Activated CD4-positive, alpha-beta T cell treated with anti-CD3 and anti-CD28 coated beads for 36 hours (primary cell): ENCODE measurements at regions of chr15 and their contacts with region 1.

Region 1: DNA sequence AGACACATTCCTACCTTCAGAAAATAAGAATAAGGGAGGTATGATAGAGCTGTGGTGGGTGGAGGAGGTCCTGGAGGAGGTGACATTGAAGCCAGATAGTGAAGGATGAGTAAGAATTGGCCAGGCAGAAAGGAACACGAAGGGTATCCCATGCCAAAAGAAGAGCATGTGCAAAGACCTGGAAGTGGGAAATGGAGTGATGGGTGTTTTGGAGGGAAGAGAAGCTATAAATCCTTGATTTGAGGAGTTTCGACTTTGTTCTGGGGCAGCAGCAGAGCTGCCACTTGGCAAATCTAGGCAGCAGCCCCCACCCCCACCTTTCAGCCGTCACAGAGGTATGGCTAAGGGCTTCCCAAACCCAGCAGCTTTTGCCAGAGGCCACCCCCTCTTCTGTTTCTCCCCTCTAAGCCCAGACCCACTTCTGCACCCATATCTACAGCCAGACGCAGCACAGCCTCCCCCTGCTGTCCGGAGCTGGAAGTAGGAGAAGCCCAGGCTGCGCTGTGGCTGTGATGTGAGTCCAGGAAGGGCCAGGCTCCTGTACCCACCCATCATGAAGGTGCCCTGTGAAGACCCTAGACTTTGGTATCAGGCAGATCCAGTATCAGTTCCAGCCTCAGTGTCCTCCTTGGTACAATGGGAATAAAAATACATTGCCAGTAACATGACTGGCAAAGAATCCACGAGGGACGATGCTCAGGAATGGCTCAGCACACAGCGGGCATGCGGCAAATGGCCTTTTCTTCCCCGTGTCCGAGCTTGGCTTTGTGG is 188.7 kb upstream of the LINGO1 start:
- DNase-seq: peak; percentile 73
- ATAC-seq: peak; percentile 84
- H3K4me3 Mint-ChIP-seq: no peak overlapping the region
- H3K27ac Mint-ChIP-seq: no peak overlapping the region
- H3K4me1 Mint-ChIP-seq: no peaks in the 10 kb centered on the region
- H3K27me3 Mint-ChIP-seq: peaks cover 42% of the 10 kb centered on the region

Region 2: GRCh38 chr15:77650265-77650664 is 171.1 kb before region 1 on chr15:
- CTCF ChIA-PET with region 1: interaction called, 3 read pairs
- POLR2A ChIA-PET with region 1: no interaction called
- intact Hi-C with region 1: loop called in 1 of 2 experiments (anchors 5 kb)
- DNase-seq: peak; percentile 51
- ATAC-seq: peak; percentile 58
- H3K4me3 Mint-ChIP-seq: no peak overlapping the region
- H3K27ac Mint-ChIP-seq: no peak overlapping the region
- H3K4me1 Mint-ChIP-seq: no peaks in the 10 kb centered on the region
- H3K27me3 Mint-ChIP-seq: peaks cover 4% of the 10 kb centered on the region

Region 3: DNA sequence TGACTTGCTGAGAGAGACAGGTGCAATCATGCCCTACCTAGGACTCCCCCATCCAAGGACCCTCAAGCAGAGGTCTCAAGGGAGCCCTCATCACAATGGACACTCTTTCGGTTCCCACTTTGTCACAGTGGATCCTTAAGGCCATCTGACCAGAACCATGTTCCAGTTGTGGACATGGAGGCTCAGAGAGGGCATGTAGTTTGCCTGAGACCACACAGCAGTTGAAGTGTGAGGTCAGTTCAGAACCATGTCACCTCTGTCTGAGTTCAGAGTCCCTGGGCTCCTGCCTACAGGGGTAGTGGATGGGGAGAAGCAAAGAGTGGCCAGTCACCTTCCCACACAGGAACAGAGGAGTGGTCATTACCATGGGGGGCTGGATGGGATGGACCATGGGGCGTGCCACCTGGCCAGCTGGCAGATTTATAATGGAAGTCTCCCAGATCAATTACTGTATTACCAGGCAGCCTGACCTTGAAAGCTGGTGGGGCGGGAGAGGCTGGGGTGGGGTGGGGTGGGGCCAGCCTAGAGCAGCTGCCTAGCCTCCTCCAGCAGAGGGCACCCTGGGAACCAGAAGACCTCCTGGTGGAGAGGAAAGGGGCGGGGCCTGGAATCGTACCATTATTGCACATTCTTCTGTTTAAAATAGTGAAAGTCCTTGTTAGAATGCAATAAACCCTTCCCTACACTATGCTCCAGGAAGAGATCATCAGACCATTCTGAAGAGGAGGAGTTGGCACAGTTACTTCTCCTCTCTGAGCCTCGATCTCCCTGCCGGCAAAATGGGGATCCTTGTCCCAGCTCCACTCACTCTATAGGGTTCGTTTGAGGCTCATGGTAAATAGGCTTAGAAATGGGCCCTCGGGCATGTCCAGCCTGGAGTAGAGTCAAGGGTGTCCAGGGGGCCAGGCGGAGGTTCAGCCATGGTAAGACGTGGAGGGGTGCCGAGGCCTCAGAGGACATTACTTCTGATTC is 161.7 kb before region 1 on chr15:
- CTCF ChIA-PET with region 1: interaction called, 4 read pairs
- POLR2A ChIA-PET with region 1: no interaction called
- intact Hi-C with region 1: loop called (anchors 2 to 5 kb)
- DNase-seq: peak; percentile 72
- ATAC-seq: peak; percentile 80
- H3K4me3 Mint-ChIP-seq: no peak overlapping the region
- H3K27ac Mint-ChIP-seq: no peak overlapping the region
- H3K4me1 Mint-ChIP-seq: no peaks in the 10 kb centered on the region
- H3K27me3 Mint-ChIP-seq: peaks cover 10% of the 10 kb centered on the region

Region 4: DNA sequence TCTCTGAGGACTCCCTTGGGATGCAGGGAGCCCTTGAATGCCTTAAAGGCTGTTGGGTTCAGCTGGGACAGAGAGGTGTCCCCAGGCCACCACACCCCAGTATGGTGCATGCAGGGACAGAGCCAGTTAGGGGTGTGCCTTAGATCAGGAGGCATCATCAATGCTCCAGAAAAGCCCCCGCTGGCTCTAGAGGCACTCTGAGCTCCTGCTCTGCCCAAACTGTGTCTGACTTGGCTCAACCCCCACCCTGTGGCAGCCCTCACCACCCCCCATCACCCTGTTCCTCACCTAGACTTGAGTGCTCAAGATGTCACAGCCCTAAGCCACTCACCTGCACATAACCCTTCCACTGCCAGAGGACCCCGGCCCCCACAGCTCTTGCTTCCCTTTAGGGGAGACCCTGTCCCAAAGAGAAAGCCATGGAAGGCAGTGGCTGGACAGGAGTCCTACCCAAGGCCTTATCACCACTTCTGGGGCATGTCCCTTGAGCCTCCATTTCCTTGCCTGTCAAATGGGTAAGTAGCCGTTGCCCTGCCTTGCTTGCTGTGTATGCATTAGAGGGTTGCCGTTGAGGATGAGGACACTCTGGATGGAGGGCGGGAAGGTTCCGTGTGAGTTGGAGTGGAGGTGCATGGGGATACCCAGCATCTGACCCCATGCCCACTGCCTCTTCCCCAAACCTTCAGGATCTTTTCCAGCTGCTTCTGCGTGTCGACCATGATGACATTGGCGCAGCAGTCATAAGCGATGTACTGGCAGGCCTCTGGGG is 371.6 kb after region 1 on chr15:
- CTCF ChIA-PET with region 1: no interaction called
- POLR2A ChIA-PET with region 1: no interaction called
- intact Hi-C with region 1: no loop called
- DNase-seq: no peak
- ATAC-seq: no peak
- H3K4me3 Mint-ChIP-seq: no peak overlapping the region
- H3K27ac Mint-ChIP-seq: no peak overlapping the region
- H3K4me1 Mint-ChIP-seq: no peaks in the 10 kb centered on the region
- H3K27me3 Mint-ChIP-seq: no peaks in the 10 kb centered on the region